ENCODE measurements at regions of chr6 and their contacts with region 1.

Region 1: GRCh38 chr6:100099189-100100074 is 105.4 kb upstream of the MCHR2 start:
- DNase-seq: no peak
- H3K4me3 ChIP-seq: no peak overlapping the region
- H3K27ac ChIP-seq: no peak overlapping the region
- H3K4me1 ChIP-seq: no peaks in the 10 kb centered on the region
- H3K27me3 ChIP-seq: peaks cover 2% of the 10 kb centered on the region
- CTCF ChIP-seq: peak; percentile 21 to 58 (median 42)
- POLR2A ChIP-seq: no peak

Region 2: DNA sequence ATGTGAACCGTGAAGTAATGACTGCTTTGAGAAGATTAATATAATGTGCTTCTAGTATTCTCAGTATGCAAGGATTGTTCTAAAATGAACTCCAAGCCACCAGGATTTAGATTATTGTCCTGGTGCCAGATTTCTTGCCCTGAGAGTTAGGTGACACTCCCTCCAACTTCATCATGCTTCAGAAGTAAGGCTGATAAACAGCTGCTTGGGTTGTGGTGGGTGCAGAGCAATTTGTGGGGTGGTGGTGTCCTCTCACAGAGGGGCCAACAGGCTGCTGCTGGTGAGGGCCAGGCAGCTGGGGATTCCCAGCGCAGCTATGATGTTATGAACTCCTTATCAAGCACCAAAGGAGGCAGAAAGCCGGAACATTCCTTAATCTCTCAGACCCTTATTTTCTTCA is 220.0 kb before region 1 on chr6:
- intact Hi-C with region 1: loop called in 1 of 2 experiments (anchors 10 kb)
- DNase-seq: no peak
- H3K4me3 ChIP-seq: no peak overlapping the region
- H3K27ac ChIP-seq: no peak overlapping the region
- H3K4me1 ChIP-seq: no peaks in the 10 kb centered on the region
- H3K27me3 ChIP-seq: no peaks in the 10 kb centered on the region
- CTCF ChIP-seq: no peak
- POLR2A ChIP-seq: no peak

Measured in adrenal gland (tissue), 19 donors.